ENCODE measurements at regions of chr4 and their contacts with region 1.

Region 1: GRCh38 chr4:146175541-146176453 is at the start of gene LSM6:
- DNase-seq: peak; percentile 75
- ATAC-seq: peak; percentile 93
- H3K4me3 Mint-ChIP-seq: peak within 1 kb of the TSS; percentile 87
- H3K27ac Mint-ChIP-seq: peak within 1 kb of the TSS; percentile 90
- H3K4me1 Mint-ChIP-seq: peaks cover 44% of the 10 kb centered on the region
- H3K27me3 Mint-ChIP-seq: no peaks in the 10 kb centered on the region
- CTCF ChIP-seq: no peak
- total RNA-seq, gene LSM6: 57.4 and 59.7 TPM in 2 replicates

Region 2: GRCh38 chr4:145840162-145840768 is 335.5 kb before region 1 on chr4:
- CTCF ChIA-PET with region 1: no interaction called
- POLR2A ChIA-PET with region 1: no interaction called
- intact Hi-C with region 1: loop called (anchors 10 kb)
- DNase-seq: no peak
- ATAC-seq: peak; percentile 76
- H3K4me3 Mint-ChIP-seq: no peak overlapping the region
- H3K27ac Mint-ChIP-seq: no peak overlapping the region
- H3K4me1 Mint-ChIP-seq: peaks cover 11% of the 10 kb centered on the region
- H3K27me3 Mint-ChIP-seq: no peaks in the 10 kb centered on the region
- CTCF ChIP-seq: no peak

Region 3: DNA sequence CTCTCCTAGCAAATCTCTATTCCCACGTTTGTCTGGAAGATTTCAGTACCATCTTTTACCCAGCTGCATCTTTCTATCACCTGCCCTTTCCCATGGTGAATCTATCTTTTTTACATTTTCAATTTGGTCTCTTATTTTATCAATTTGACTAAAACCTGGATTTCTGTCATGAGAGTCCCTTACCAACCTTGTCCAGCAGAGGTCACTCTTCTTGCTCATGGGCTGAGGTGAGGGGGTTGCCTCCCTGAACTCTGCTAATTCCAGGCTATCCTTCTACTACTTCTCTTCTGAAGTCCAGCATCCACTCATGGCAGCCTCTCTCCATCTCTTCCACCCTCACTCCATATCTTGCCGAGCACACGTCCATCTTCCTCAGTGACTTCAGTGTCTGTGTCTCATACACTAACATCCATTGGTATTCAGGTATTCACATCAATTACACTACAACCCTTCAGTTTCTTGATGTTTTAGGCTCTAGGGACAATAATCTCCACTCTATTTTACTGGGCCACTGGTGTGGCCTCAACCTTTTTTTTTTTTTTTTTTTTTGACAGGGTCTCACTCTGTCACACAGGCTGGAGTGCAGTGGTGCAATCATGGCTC is 219.4 kb before region 1 on chr4:
- CTCF ChIA-PET with region 1: no interaction called
- POLR2A ChIA-PET with region 1: no interaction called
- intact Hi-C with region 1: loop called (anchors 1 kb)
- DNase-seq: no peak
- ATAC-seq: peak; percentile 77
- H3K4me3 Mint-ChIP-seq: no peak overlapping the region
- H3K27ac Mint-ChIP-seq: no peak overlapping the region
- H3K4me1 Mint-ChIP-seq: peaks cover 6% of the 10 kb centered on the region
- H3K27me3 Mint-ChIP-seq: no peaks in the 10 kb centered on the region
- CTCF ChIP-seq: peak; percentile 87

Region 4: GRCh38 chr4:146110871-146111485 is 64.8 kb before region 1 on chr4:
- CTCF ChIA-PET with region 1: no interaction called
- POLR2A ChIA-PET with region 1: no interaction called
- intact Hi-C with region 1: loop called (anchors 5 kb)
- DNase-seq: no peak
- ATAC-seq: peak; percentile 88
- H3K4me3 Mint-ChIP-seq: peak overlapping the region; percentile 33
- H3K27ac Mint-ChIP-seq: peak overlapping the region; percentile 63
- H3K4me1 Mint-ChIP-seq: peaks cover 34% of the 10 kb centered on the region
- H3K27me3 Mint-ChIP-seq: no peaks in the 10 kb centered on the region
- CTCF ChIP-seq: no peak

Region 5: DNA sequence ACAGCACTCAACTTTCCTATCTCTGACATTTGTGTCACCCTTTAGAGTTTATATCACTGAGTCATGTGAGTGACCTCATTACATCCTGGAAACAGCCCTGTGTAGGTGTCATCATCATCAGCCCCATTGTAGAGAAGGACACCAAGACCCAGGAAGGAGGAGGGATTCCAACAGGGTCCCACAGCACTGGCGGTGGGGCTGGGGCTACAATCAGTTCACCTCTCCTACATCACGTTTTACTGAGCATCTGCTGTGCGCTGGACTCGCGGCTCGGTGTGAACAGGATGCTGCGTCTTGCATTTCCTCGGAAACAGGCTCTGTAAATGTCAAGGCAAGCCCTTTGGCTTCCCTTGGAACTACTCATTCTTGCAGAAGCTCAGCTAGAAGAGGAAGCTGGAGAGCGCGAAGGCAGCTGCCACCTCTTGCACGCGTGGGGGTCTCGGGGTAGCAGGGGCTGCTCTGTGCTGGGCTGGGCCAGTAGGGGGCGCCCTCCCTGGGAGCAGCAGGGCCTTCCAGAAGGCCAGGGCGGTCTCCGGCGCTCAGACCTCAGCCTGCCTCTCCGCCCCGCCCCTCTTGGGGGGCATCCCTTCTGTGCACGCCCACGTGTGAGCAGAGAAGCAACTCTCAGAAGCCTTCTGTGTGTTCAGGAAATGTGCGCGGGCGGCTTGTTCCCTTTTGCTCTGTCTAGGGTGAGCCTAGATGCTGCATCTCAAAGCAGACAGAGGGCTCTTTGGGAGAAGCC is 67.5 kb after region 1 on chr4:
- CTCF ChIA-PET with region 1: no interaction called
- POLR2A ChIA-PET with region 1: no interaction called
- intact Hi-C with region 1: no loop called
- DNase-seq: peak; percentile 33
- ATAC-seq: peak; percentile 78
- H3K4me3 Mint-ChIP-seq: no peak overlapping the region
- H3K27ac Mint-ChIP-seq: no peak overlapping the region
- H3K4me1 Mint-ChIP-seq: peaks cover 12% of the 10 kb centered on the region
- H3K27me3 Mint-ChIP-seq: no peaks in the 10 kb centered on the region
- CTCF ChIP-seq: no peak

Region 6: GRCh38 chr4:146522098-146522868 is 346.5 kb after region 1 on chr4:
- CTCF ChIA-PET with region 1: no interaction called
- POLR2A ChIA-PET with region 1: no interaction called
- intact Hi-C with region 1: loop called (anchors 5 kb)
- DNase-seq: peak; percentile 75
- ATAC-seq: peak; percentile 80
- H3K4me3 Mint-ChIP-seq: no peak overlapping the region
- H3K27ac Mint-ChIP-seq: no peak overlapping the region
- H3K4me1 Mint-ChIP-seq: peaks cover 21% of the 10 kb centered on the region
- H3K27me3 Mint-ChIP-seq: no peaks in the 10 kb centered on the region
- CTCF ChIP-seq: no peak

Region 7: DNA sequence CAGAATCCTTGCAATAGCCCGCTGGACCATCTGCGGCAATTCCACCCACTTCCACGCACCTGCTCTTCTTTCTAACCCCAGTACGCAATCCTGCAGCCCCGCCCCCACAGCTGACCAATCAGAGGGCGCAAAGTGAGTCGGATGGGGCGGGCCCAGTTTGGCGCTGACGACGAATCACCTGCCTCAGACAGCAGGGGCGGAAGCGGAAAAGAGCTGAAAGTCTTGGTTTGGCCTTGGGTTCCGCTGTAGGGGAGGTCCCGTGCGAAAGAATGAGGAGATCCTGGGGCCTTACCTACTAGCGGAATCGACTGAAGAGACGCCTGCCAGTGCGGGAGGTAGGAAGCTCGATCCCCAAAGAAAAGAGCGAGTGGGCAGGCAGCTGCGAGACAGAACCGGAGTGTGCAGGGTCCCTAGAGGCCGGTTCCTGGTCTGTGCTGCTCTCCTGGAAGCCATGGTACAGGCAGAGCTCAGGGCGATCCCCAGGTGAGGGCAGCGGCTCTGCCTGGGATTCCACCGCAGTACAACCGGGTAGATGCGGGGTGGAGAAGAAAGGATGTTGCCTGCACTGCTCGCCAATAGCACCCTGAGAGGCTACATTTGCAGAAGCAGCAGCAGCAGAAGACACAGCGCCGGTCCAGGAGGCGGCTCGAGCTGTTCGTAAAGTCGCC is 1441.5 kb after region 1 on chr4 and contains the start of gene TMEM184C:
- CTCF ChIA-PET with region 1: no interaction called
- POLR2A ChIA-PET with region 1: no interaction called
- intact Hi-C with region 1: loop called (anchors 10 kb)
- DNase-seq: peak; percentile 97
- ATAC-seq: peak; percentile 97
- H3K4me3 Mint-ChIP-seq: peak within 1 kb of the TSS; percentile 98
- H3K27ac Mint-ChIP-seq: peak within 1 kb of the TSS; percentile 96
- H3K4me1 Mint-ChIP-seq: peaks cover 44% of the 10 kb centered on the region
- H3K27me3 Mint-ChIP-seq: peaks cover 2% of the 10 kb centered on the region
- CTCF ChIP-seq: no peak
- total RNA-seq, gene TMEM184C: 25.0 and 27.9 TPM in 2 replicates